B cell (primary cell): ENCODE measurements at regions of chr9 and their contacts with region 1.

Region 1: DNA sequence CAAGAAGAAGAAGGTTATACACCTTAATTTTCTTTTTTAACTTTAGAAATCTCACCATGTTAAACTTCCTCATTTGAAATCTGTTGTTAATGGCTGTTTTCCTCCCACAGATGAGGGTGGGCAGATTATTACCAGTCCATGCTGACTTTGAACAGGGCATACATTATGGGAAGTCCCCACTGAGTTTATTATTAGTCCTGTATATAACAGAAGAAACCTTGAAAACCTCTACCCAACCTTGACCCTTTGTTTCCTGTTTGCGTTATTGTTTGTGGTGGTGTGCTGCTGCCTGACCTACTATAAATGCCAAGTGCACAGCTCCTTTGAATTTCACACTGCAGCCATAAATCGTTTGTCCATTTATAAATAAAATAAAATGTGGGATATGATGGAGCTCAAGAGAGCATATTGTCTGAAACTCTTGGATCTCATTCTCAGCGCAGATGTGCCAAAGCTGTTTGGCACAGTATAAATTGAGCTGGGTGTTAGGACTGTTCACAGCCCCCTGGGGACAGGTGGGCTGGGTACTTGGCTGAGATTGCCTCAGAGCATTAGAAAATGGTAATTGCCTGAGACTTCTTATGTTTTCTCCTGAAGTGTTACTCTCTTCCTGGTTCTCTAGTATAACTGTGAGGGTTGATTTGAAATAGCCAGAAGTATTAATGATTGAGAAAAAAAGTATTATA is 139.6 kb downstream of the SPATA31D1 start:
- DNase-seq: peak; percentile 81
- ATAC-seq: peak; percentile 85
- H3K4me3 ChIP-seq: peak overlapping the region in 1 of 5 experiments; percentile 51
- H3K4me3 Mint-ChIP-seq: peak overlapping the region; percentile 70
- H3K27ac ChIP-seq: peak overlapping the region; percentile 84 to 92
- H3K27ac Mint-ChIP-seq: peak overlapping the region; percentile 91
- H3K4me1 ChIP-seq: peaks cover 61 to 63% of the 10 kb centered on the region in 2 donors
- H3K4me1 Mint-ChIP-seq: peaks cover 66% of the 10 kb centered on the region
- H3K27me3 ChIP-seq: no peaks in the 10 kb centered on the region
- H3K27me3 Mint-ChIP-seq: no peaks in the 10 kb centered on the region
- CTCF ChIP-seq: no peak

Region 2: GRCh38 chr9:82091610-82092009 is 36.5 kb before region 1 on chr9:
- CTCF ChIA-PET with region 1: no interaction called
- POLR2A ChIA-PET with region 1: no interaction called
- intact Hi-C with region 1: loop called (anchors 1 kb)
- DNase-seq: peak; percentile 65
- ATAC-seq: peak; percentile 78
- H3K4me3 ChIP-seq: peak overlapping the region in 1 of 5 experiments; percentile 35
- H3K4me3 Mint-ChIP-seq: peak overlapping the region; percentile 70
- H3K27ac ChIP-seq: peak overlapping the region; percentile 60 to 77
- H3K27ac Mint-ChIP-seq: peak overlapping the region; percentile 85
- H3K4me1 ChIP-seq: peaks cover 41% of the 10 kb centered on the region in 2 donors
- H3K4me1 Mint-ChIP-seq: peaks cover 56% of the 10 kb centered on the region
- H3K27me3 ChIP-seq: no peaks in the 10 kb centered on the region
- H3K27me3 Mint-ChIP-seq: no peaks in the 10 kb centered on the region
- CTCF ChIP-seq: no peak

Region 3: DNA sequence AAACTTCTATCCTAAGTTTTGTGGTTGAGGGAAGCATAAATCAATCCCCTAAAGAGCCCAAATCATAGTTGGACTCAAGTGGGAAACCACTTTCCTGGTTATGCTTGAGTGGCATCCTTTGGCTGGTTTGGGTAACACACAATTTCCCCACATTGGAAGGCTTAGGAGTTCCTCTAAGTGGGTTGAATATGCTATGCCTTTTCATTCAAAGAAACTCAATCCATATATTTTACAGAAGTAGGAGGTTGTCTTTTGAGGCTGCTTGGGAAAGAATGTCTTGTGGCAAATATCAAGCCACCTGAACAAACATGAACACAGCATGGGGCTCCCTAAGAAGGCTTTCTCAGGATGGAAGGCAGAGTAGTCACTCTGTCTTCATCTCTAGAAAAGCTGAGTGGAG is 18.5 kb before region 1 on chr9:
- CTCF ChIA-PET with region 1: no interaction called
- POLR2A ChIA-PET with region 1: no interaction called
- intact Hi-C with region 1: no loop called
- DNase-seq: no peak
- ATAC-seq: no peak
- H3K4me3 ChIP-seq: no peak overlapping the region
- H3K4me3 Mint-ChIP-seq: no peak overlapping the region
- H3K27ac ChIP-seq: no peak overlapping the region
- H3K27ac Mint-ChIP-seq: no peak overlapping the region
- H3K4me1 ChIP-seq: peaks cover 0 to 3% of the 10 kb centered on the region in 2 donors
- H3K4me1 Mint-ChIP-seq: peaks cover 5% of the 10 kb centered on the region
- H3K27me3 ChIP-seq: no peaks in the 10 kb centered on the region
- H3K27me3 Mint-ChIP-seq: no peaks in the 10 kb centered on the region
- CTCF ChIP-seq: no peak

Region 4: DNA sequence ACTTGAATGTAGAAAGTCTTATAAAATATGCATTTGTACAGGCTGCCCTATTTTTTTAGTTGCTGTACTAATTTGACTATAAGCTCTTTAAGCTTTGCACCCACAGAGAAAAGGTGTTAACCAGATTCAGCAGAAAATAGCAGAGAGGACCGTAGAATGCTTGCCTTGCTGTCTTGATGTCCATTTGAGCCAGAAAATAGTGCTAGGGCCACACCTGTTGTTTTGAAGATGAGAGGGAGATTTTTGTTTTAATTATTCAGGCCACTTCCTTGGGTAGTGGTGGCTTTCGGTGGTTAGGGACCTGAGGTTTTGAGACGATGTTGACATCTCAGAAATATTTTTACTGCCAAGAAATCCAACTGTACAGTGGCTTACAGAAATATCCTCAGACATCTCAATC is 56.4 kb after region 1 on chr9:
- CTCF ChIA-PET with region 1: no interaction called
- POLR2A ChIA-PET with region 1: no interaction called
- intact Hi-C with region 1: loop called (anchors 1 kb)
- DNase-seq: peak; percentile 45
- ATAC-seq: peak; percentile 83
- H3K4me3 ChIP-seq: peak overlapping the region in 3 of 5 experiments; percentile 3 to 40 (median 16)
- H3K4me3 Mint-ChIP-seq: peak overlapping the region; percentile 4
- H3K27ac ChIP-seq: peak overlapping the region; percentile 50 to 69
- H3K27ac Mint-ChIP-seq: peak overlapping the region; percentile 13
- H3K4me1 ChIP-seq: peaks cover 26 to 30% of the 10 kb centered on the region in 2 donors
- H3K4me1 Mint-ChIP-seq: peaks cover 36% of the 10 kb centered on the region
- H3K27me3 ChIP-seq: no peaks in the 10 kb centered on the region
- H3K27me3 Mint-ChIP-seq: no peaks in the 10 kb centered on the region
- CTCF ChIP-seq: no peak

Region 5: DNA sequence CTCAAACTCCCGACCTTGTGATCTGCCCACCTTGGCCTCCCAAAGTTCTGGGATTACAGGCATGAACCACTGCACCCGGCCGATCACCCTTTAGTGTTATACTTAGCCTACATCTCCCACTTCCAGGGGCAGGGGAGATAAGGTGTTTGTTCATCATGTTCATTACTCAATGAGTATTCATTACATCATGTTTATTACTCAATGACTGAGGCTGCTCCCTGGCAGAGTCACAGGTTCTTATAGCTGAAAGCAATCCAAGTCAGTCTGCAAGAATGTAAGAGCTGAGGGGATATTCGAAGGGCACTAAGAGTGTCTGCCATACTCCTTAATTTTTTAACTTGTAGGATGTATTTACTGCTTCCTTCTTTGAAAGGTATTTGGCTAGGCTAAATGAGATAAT is 74.7 kb after region 1 on chr9:
- CTCF ChIA-PET with region 1: no interaction called
- POLR2A ChIA-PET with region 1: interaction called, 10 read pairs
- intact Hi-C with region 1: no loop called
- DNase-seq: no peak
- ATAC-seq: no peak
- H3K4me3 ChIP-seq: no peak overlapping the region
- H3K4me3 Mint-ChIP-seq: no peak overlapping the region
- H3K27ac ChIP-seq: no peak overlapping the region
- H3K27ac Mint-ChIP-seq: no peak overlapping the region
- H3K4me1 ChIP-seq: no peaks in the 10 kb centered on the region
- H3K4me1 Mint-ChIP-seq: peaks cover 17% of the 10 kb centered on the region
- H3K27me3 ChIP-seq: no peaks in the 10 kb centered on the region
- H3K27me3 Mint-ChIP-seq: no peaks in the 10 kb centered on the region
- CTCF ChIP-seq: no peak